B cell (primary cell): ENCODE measurements at regions of chr1 and their contacts with region 1.

Region 1: DNA sequence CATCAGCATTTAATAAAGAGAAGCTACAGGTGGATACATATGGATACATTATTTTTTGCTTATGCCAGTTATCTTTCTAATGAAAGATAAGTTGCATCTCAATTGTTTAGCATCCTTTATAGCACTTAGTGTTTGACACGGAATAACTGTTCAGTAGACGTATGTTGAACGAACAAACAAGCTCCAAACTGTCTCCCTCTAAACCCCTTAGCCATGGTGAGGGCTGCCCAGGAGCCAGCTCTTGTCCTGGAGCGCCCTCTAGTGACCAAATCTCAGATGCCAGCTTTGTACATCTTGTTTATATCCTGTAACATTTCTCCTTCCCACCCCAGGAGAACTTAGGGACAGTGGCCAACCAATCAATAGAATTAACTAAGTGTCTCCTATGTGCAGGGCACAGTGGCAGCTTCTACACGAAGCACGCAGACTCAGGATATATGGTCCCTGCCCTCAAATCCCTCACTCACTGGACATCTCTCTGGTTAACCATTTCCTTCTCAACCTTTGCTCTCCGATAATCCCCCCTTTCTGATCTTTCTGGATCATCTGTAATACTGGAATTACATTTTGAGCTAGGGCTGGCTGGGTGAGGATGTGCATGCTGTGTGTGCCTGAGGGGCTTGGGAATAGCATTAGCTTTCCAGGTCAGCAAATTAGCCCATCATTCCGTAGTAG is 22.9 kb downstream of the KCNA10 start:
- DNase-seq: peak; percentile 84
- ATAC-seq: peak; percentile 84
- H3K4me3 ChIP-seq: no peak overlapping the region
- H3K4me3 Mint-ChIP-seq: no peak overlapping the region
- H3K27ac ChIP-seq: no peak overlapping the region
- H3K27ac Mint-ChIP-seq: no peak overlapping the region
- H3K4me1 ChIP-seq: no peaks in the 10 kb centered on the region
- H3K4me1 Mint-ChIP-seq: no peaks in the 10 kb centered on the region
- H3K27me3 ChIP-seq: no peaks in the 10 kb centered on the region
- H3K27me3 Mint-ChIP-seq: no peaks in the 10 kb centered on the region
- CTCF ChIP-seq: peak; percentile 98

Region 2: DNA sequence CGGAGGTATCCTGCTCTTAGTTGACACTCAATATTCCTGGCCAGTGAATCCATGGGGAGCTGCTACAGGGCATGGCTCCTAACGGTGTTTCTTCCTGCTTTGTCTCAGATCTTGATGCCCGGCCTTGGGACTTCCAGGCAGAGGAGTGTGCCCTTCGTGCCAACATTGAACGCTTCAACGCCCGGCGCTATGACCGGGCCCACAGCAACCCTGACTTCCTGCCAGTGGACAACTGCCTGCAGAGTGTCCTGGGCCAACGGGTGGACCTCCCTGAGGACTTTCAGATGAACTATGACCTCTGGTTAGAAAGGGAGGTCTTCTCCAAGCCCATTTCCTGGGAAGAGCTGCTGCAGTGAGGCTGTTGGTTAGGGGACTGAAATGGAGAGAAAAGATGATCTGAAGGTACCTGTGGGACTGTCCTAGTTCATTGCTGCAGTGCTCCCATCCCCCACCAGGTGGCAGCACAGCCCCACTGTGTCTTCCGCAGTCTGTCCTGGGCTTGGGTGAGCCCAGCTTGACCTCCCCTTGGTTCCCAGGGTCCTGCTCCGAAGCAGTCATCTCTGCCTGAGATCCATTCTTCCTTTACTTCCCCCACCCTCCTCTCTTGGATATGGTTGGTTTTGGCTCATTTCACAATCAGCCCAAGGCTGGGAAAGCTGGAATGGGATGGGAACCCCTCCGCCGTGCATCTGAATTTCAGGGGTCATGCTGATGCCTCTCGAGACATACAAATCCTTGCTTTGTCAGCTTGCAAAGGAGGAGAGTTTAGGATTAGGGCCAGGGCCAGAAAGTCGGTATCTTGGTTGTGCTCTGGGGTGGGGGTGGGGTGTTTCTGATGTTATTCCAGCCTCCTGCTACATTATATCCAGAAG is 442.3 kb before region 1 on chr1:
- CTCF ChIA-PET with region 1: interaction called, 41 read pairs
- POLR2A ChIA-PET with region 1: no interaction called
- intact Hi-C with region 1: no loop called
- DNase-seq: peak; percentile 74
- ATAC-seq: peak; percentile 77
- H3K4me3 ChIP-seq: no peak overlapping the region
- H3K4me3 Mint-ChIP-seq: no peak overlapping the region
- H3K27ac ChIP-seq: no peak overlapping the region
- H3K27ac Mint-ChIP-seq: peak overlapping the region; percentile 21
- H3K4me1 ChIP-seq: no peaks in the 10 kb centered on the region
- H3K4me1 Mint-ChIP-seq: no peaks in the 10 kb centered on the region
- H3K27me3 ChIP-seq: no peaks in the 10 kb centered on the region
- H3K27me3 Mint-ChIP-seq: no peaks in the 10 kb centered on the region
- CTCF ChIP-seq: peak; percentile 97

Region 3: GRCh38 chr1:110196917-110197765 is 298.9 kb before region 1 on chr1:
- CTCF ChIA-PET with region 1: interaction called, 531 read pairs
- POLR2A ChIA-PET with region 1: no interaction called
- intact Hi-C with region 1: loop called (anchors 1 kb)
- DNase-seq: peak; percentile 71
- ATAC-seq: peak; percentile 93
- H3K4me3 ChIP-seq: no peak overlapping the region
- H3K4me3 Mint-ChIP-seq: no peak overlapping the region
- H3K27ac ChIP-seq: no peak overlapping the region
- H3K27ac Mint-ChIP-seq: no peak overlapping the region
- H3K4me1 ChIP-seq: no peaks in the 10 kb centered on the region
- H3K4me1 Mint-ChIP-seq: no peaks in the 10 kb centered on the region
- H3K27me3 ChIP-seq: peaks cover 0 to 3% (median 0%) of the 10 kb centered on the region in 4 experiments
- H3K27me3 Mint-ChIP-seq: peaks cover 4% of the 10 kb centered on the region
- CTCF ChIP-seq: peak; percentile 97

Region 4: GRCh38 chr1:110209715-110210603 is 286.1 kb before region 1 on chr1 and contains the start of gene KCNC4:
- CTCF ChIA-PET with region 1: interaction called, 531 read pairs
- POLR2A ChIA-PET with region 1: no interaction called
- intact Hi-C with region 1: no loop called
- DNase-seq: peak; percentile 96
- ATAC-seq: peak; percentile 85
- H3K4me3 ChIP-seq: peak within 1 kb of the TSS; percentile 34 to 75 (median 66)
- H3K4me3 Mint-ChIP-seq: peak within 1 kb of the TSS; percentile 95
- H3K27ac ChIP-seq: peak within 1 kb of the TSS; percentile 76 to 83
- H3K27ac Mint-ChIP-seq: peak within 1 kb of the TSS; percentile 96
- H3K4me1 ChIP-seq: peaks cover 17 to 31% of the 10 kb centered on the region in 2 donors
- H3K4me1 Mint-ChIP-seq: peaks cover 43% of the 10 kb centered on the region
- H3K27me3 ChIP-seq: peaks cover 0 to 8% (median 0%) of the 10 kb centered on the region in 4 experiments
- H3K27me3 Mint-ChIP-seq: no peaks in the 10 kb centered on the region
- CTCF ChIP-seq: no peak
- total RNA-seq, gene KCNC4: 24.1 and 24.3 TPM in 2 replicates

Region 5: GRCh38 chr1:110407260-110408210 is 88.5 kb before region 1 on chr1 and contains the start of gene LAMTOR5:
- CTCF ChIA-PET with region 1: interaction called, 39 read pairs
- POLR2A ChIA-PET with region 1: no interaction called
- intact Hi-C with region 1: loop called (anchors 1 kb)
- DNase-seq: peak; percentile 94
- ATAC-seq: peak; percentile 92
- H3K4me3 ChIP-seq: peak within 1 kb of the TSS; percentile 76 to 99 (median 90)
- H3K4me3 Mint-ChIP-seq: peak within 1 kb of the TSS; percentile 100
- H3K27ac ChIP-seq: peak within 1 kb of the TSS; percentile 87 to 90
- H3K27ac Mint-ChIP-seq: peak within 1 kb of the TSS; percentile 99
- H3K4me1 ChIP-seq: peaks cover 18 to 23% of the 10 kb centered on the region in 2 donors
- H3K4me1 Mint-ChIP-seq: peaks cover 25% of the 10 kb centered on the region
- H3K27me3 ChIP-seq: no peaks in the 10 kb centered on the region
- H3K27me3 Mint-ChIP-seq: no peaks in the 10 kb centered on the region
- CTCF ChIP-seq: peak; percentile 23
- total RNA-seq, gene LAMTOR5: 145 and 151 TPM in 2 replicates

Region 6: DNA sequence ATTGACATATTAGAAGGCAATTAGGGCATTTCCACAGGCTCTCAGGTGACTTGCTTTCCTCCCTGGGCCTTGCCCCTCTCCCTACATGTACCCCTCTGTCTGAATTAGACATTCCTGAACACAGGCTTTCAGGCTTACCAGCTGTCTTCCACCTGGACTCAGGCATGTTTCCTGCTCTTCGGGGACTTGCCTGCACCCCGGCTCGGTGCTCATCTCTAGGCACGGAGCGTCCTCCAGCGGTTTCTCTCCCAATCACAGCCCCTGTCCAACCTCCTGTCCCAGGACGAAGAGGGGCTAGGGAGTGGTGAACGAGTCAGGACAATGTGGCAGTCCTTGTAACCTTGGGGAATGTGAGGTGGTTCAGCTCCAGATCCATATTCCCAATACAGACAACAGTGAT is 40.9 kb before region 1 on chr1:
- CTCF ChIA-PET with region 1: interaction called, 62 read pairs
- POLR2A ChIA-PET with region 1: interaction called, 12 read pairs
- intact Hi-C with region 1: no loop called
- DNase-seq: no peak
- ATAC-seq: no peak
- H3K4me3 ChIP-seq: no peak overlapping the region
- H3K4me3 Mint-ChIP-seq: no peak overlapping the region
- H3K27ac ChIP-seq: no peak overlapping the region
- H3K27ac Mint-ChIP-seq: no peak overlapping the region
- H3K4me1 ChIP-seq: peaks cover 0 to 2% of the 10 kb centered on the region in 2 donors
- H3K4me1 Mint-ChIP-seq: no peaks in the 10 kb centered on the region
- H3K27me3 ChIP-seq: no peaks in the 10 kb centered on the region
- H3K27me3 Mint-ChIP-seq: peaks cover 13% of the 10 kb centered on the region
- CTCF ChIP-seq: no peak

Region 7: GRCh38 chr1:110508038-110508940 is 12.2 kb after region 1 on chr1:
- CTCF ChIA-PET with region 1: interaction called, 33 read pairs
- POLR2A ChIA-PET with region 1: no interaction called
- intact Hi-C with region 1: no loop called
- DNase-seq: no peak
- ATAC-seq: no peak
- H3K4me3 ChIP-seq: no peak overlapping the region
- H3K4me3 Mint-ChIP-seq: no peak overlapping the region
- H3K27ac ChIP-seq: no peak overlapping the region
- H3K27ac Mint-ChIP-seq: no peak overlapping the region
- H3K4me1 ChIP-seq: no peaks in the 10 kb centered on the region
- H3K4me1 Mint-ChIP-seq: no peaks in the 10 kb centered on the region
- H3K27me3 ChIP-seq: peaks cover 0 to 6% (median 0%) of the 10 kb centered on the region in 4 experiments
- H3K27me3 Mint-ChIP-seq: peaks cover 15% of the 10 kb centered on the region
- CTCF ChIP-seq: no peak